Spleen (tissue), 13 donors: ENCODE measurements at regions of chr9 and their contacts with region 1.

Region 1: DNA sequence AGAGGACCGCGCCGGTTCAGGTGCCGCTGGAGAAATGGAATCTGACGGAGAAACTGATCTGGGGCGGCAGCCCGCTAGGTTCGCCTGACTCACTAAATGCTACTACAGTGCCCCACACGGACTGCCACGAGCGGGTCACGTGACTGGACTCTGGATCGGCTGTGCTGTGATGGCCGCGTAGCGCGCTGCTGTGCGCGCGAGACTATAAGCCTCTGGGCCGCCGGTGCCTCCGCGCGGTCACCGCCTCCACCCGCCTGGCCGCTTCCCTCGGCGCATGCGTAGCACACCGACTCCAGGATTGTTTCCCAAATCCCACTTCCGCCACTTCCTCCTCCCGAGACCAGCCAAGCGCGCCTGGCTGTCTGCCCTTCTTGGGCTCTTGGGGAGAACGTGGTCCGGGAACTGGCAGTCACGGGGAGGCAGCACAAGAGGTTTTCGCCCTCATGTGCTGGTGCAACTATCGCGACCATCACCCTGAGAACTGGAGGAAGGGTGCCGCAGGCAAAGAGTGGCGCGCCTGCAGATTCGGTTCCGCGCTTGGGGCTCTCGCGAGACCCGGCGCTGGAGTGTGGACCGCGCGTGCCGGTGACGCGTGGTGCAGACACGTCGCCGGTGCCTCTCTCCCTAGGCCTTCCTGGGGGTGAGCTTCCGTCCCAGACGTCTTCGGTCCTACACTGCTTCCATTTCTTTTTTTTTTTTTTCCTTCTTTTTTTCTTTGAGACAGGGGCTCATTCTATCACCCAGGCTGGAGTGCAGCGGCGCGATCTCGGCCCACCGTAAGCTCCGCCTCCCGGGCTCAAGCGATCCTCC is 35.8 kb upstream of the GLDC start:
- DNase-seq: peak; percentile 98
- H3K4me3 ChIP-seq: peak overlapping the region; percentile 57 to 79 (median 68)
- H3K27ac ChIP-seq: peak overlapping the region; percentile 92 to 98 (median 98)
- H3K4me1 ChIP-seq: peaks cover 3 to 58% (median 39%) of the 10 kb centered on the region in 6 donors
- H3K27me3 ChIP-seq: no peaks in the 10 kb centered on the region
- CTCF ChIP-seq: peak in 5 of 11 experiments; percentile 6 to 43 (median 32)
- POLR2A ChIP-seq: peak; percentile 65 to 87 (median 70)

Region 2: GRCh38 chr9:6412487-6413364 is 268.6 kb before region 1 on chr9 and contains the start of gene UHRF2:
- intact Hi-C with region 1: loop called (anchors 10 kb)
- DNase-seq: peak; percentile 100
- H3K4me3 ChIP-seq: peak within 1 kb of the TSS; percentile 60 to 100 (median 96)
- H3K27ac ChIP-seq: peak within 1 kb of the TSS; percentile 81 to 97 (median 94)
- H3K4me1 ChIP-seq: peaks cover 25 to 65% (median 49%) of the 10 kb centered on the region in 6 donors
- H3K27me3 ChIP-seq: no peaks in the 10 kb centered on the region
- CTCF ChIP-seq: peak in 5 of 11 experiments; percentile 16 to 59 (median 40)
- POLR2A ChIP-seq: peak; percentile 53 to 92 (median 69)
- total RNA-seq, gene UHRF2: 57.6 to 120 (median 66.7) TPM

Region 3: GRCh38 chr9:6616951-6617602 is 64.3 kb before region 1 on chr9:
- intact Hi-C with region 1: no loop called
- DNase-seq: no peak
- H3K4me3 ChIP-seq: no peak overlapping the region
- H3K27ac ChIP-seq: no peak overlapping the region
- H3K4me1 ChIP-seq: no peaks in the 10 kb centered on the region
- H3K27me3 ChIP-seq: no peaks in the 10 kb centered on the region
- CTCF ChIP-seq: no peak
- POLR2A ChIP-seq: no peak